Right ventricle myocardium inferior (tissue), 1 donor: ENCODE measurements at regions of chr9 and their contacts with region 1.

Region 1: GRCh38 chr9:129610473-129611301 is 10.2 kb downstream of the C9orf50 start:
- DNase-seq: peak; percentile 89
- ATAC-seq: peak; percentile 53

Region 2: DNA sequence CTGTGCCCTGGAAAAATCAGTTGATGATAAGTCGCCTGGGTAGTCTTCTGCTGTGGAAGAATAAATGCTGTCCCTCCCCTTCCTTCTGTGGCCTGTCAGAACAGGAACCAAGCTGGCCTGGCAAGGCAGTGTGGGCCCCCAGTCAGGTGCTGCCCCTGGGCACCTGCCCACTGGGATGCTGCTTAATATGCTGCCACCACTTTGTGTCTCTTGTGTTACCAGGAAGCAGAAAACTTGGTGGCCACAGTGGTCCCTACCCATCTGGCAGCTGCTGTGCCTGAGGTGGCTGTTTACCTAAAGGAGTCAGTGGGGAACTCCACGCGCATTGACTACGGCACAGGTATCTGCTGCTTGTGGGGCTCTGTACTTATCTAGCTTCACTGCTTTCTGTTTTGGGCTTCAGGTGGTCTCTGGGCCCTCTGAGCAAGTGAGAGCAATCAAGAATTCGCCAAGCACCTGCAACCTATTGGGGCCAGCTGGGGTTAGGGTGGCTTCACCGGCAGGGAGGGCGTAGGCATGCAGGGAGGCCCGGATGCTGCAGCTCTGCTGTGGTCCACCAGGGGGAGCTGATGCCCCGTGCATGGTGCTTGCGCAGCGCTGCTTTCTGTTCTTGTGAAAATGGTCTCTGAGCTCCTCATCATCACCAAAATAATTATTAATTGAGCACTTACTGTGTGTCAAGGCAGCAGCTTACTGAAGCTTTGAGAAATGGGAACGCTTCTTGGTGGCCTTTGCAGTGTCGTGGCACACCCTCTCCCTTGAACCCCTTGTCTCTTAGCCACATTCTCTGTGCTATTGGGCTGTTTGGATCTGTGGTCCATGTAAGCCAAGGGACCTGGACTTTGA is 479.2 kb before region 1 on chr9:
- intact Hi-C with region 1: loop called (anchors 2 kb)
- DNase-seq: peak; percentile 89
- ATAC-seq: peak; percentile 83

Region 3: GRCh38 chr9:129177791-129178559 is 432.7 kb before region 1 on chr9 and contains the start of gene IER5L:
- intact Hi-C with region 1: loop called (anchors 1 kb)
- DNase-seq: peak; percentile 98
- ATAC-seq: peak; percentile 84
- total RNA-seq, gene IER5L: 4.6 TPM

Region 4: GRCh38 chr9:129383561-129384416 is 226.9 kb before region 1 on chr9:
- intact Hi-C with region 1: loop called (anchors 5 kb)
- DNase-seq: peak; percentile 95
- ATAC-seq: peak; percentile 91

Region 5: DNA sequence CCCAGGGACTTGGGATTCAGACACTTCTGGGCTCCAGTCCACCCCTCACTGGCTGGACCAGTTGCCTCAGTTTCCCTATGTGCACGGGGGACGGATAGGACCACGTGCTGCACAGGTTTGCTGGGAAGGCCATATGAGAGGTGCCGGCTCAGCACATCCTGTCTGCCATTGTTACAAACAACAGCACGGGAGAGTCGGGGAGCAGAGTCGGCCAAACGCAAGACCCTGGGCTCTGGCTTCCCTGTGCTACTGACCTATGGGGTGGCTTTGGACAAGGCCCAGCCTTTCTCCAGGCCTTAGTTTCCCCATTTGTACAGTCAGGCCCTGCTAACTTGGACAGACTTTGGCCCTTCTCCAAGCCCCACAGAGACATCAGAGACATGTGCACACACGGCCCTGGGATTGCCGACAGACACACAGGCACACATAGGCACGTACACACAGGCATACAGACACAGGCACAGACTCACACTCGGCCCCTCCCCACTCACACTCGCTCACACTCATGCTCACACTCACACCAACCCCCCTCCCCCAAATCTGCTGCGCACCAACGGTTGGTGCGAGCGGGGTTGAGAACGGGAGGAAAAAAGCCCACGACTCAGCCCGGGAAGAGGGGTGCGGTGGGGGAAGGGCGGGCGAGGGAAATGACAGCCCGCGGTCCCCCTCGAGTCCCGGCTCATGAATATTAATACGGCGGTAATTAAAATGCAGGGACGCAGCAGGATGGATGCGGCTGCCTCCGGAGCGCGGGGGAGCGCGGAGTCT is 122.9 kb before region 1 on chr9:
- intact Hi-C with region 1: loop called (anchors 5 kb)
- DNase-seq: peak; percentile 81
- ATAC-seq: no peak

Region 6: GRCh38 chr9:129786481-129786880 is 175.8 kb after region 1 on chr9:
- intact Hi-C with region 1: no loop called
- DNase-seq: no peak
- ATAC-seq: no peak